ENCODE measurements at regions of chr5 and their contacts with region 1.

Region 1: GRCh38 chr5:41270423-41271251 is 57.3 kb upstream of the C6 start:
- DNase-seq: no peak

Region 2: DNA sequence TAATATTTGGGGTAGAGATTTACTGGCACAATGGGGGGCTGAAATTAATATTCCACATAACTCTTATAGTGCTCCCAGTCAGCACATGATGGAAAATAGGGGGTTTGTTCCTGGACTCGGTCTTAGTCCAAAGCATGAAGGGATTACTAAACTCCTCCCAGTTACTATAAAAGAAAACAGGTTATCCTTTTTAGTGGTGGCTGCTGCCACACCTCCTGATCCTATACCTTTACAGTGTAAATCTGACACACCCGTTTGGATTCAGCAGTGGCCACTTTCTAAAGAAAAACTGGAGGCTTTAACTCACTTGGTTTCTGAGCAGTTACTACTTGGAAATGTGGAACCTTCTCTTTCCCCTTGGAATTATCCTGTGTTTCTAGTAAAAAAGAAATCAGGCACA is 1163.8 kb before region 1 on chr5:
- intact Hi-C with region 1: loop called in 1 of 2 experiments (anchors 5 kb)
- DNase-seq: no peak

Region 3: GRCh38 chr5:40904205-40904993 is 366.2 kb before region 1 on chr5:
- intact Hi-C with region 1: loop called in 1 of 2 experiments (anchors 5 kb)
- DNase-seq: no peak

Region 4: DNA sequence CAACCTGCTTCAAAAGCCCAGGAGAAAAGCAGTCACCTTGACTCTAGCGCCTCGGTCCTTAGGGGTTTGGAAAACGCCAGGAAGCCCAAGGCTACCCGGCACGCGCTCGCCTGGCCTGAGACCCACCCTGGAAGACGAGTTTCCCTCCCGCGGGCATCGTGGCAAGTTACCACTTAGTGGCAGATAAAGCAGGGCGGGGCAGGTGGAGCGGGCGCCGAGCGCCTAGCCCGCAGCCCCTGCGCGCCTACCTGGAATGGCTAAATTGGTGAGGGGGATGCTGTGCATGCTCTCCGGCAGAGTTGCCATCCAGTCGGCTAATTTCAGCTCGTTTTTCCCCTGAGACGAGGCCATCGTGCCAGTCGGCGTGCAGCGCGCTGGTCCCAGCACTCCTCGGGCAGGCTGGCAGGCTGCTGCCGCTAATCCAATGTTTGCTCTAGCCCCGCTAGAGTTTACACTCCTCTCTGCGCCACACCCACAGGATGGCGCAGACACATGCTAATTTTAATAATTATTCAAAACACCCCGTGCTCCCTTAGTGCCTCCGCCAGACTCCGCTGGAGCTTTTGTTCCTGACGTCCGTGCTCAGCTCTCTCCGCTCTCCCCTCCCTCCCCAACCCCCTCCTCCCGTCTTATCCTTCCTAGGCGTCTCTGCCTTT is 239.7 kb after region 1 on chr5 and contains the start of gene PLCXD3:
- intact Hi-C with region 1: loop called in 1 of 2 experiments (anchors 10 kb)
- DNase-seq: peak; percentile 75
- total RNA-seq, gene PLCXD3: 22.0 to 24.4 TPM

Region 5: GRCh38 chr5:41641621-41642020 is 371.0 kb after region 1 on chr5:
- intact Hi-C with region 1: loop called in 1 of 2 experiments (anchors 10 kb)
- DNase-seq: no peak

Region 6: DNA sequence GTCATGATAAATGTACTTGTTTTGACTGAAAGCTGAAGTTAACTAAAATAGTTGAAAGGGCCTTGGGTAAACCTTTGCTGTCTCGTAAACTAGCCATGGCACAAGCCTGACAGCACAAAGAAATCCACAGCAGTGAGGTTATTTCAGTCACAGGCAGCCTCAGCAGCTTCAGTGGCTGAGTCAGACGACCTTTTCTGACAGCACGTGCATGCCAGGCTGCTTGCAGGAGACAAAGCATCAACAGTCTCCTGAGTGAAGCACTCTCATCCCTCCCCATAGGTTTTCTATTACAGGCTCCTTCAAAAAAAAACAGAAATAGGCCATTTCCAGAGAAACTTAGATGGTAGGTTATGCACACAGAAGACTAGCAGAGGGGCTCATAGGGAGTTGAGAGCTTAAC is 565.0 kb after region 1 on chr5:
- intact Hi-C with region 1: loop called in 1 of 2 experiments (anchors 10 kb)
- DNase-seq: peak; percentile 83

Measured in posterior vena cava (tissue), 2 donors.